ENCODE measurements at regions of chr2 and their contacts with region 1.

Region 1: GRCh38 chr2:37389989-37390765 is 45.7 kb downstream of the QPCT start:
- DNase-seq: peak; percentile 76
- ATAC-seq: peak; percentile 97
- H3K4me3 Mint-ChIP-seq: no peak overlapping the region
- H3K27ac Mint-ChIP-seq: peak overlapping the region; percentile 33
- H3K4me1 Mint-ChIP-seq: peaks cover 3% of the 10 kb centered on the region
- H3K27me3 Mint-ChIP-seq: peaks cover 3% of the 10 kb centered on the region

Region 2: GRCh38 chr2:37196320-37197195 is 193.6 kb before region 1 on chr2 and contains the start of gene CEBPZOS:
- CTCF ChIA-PET with region 1: no interaction called
- DNase-seq: peak; percentile 92
- ATAC-seq: peak; percentile 92
- H3K4me3 Mint-ChIP-seq: peak within 1 kb of the TSS; percentile 97
- H3K27ac Mint-ChIP-seq: peak within 1 kb of the TSS; percentile 99
- H3K4me1 Mint-ChIP-seq: peaks cover 33% of the 10 kb centered on the region
- H3K27me3 Mint-ChIP-seq: no peaks in the 10 kb centered on the region
- total RNA-seq, gene CEBPZOS: 35.6 to 37.9 TPM

Region 3: DNA sequence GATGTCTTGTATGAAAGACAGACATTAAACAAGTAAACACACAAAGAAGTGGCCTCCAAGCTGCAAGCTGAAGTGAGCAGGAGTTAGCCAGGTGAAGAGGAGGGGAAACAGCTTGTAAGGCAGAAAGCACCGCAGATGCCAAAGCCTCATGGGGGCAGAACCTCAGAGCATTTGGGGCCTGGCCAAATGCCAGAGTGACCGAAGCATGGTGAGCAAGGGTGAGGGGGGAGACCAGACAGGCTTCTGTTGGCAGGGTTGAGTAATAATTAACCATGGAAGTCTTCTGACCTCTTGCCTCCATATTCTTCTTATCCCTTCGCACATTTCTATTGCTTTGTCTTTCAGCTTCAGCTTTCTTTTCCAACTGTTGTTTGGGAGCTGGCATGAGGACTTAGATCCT is 40.1 kb before region 1 on chr2:
- CTCF ChIA-PET with region 1: no interaction called
- DNase-seq: no peak
- ATAC-seq: no peak
- H3K4me3 Mint-ChIP-seq: no peak overlapping the region
- H3K27ac Mint-ChIP-seq: no peak overlapping the region
- H3K4me1 Mint-ChIP-seq: no peaks in the 10 kb centered on the region
- H3K27me3 Mint-ChIP-seq: peaks cover 66% of the 10 kb centered on the region

Region 4: GRCh38 chr2:37414470-37414949 is 24.3 kb after region 1 on chr2:
- CTCF ChIA-PET with region 1: interaction called, 10 read pairs
- DNase-seq: no peak
- ATAC-seq: peak; percentile 64
- H3K4me3 Mint-ChIP-seq: no peak overlapping the region
- H3K27ac Mint-ChIP-seq: no peak overlapping the region
- H3K4me1 Mint-ChIP-seq: peaks cover 5% of the 10 kb centered on the region
- H3K27me3 Mint-ChIP-seq: peaks cover 7% of the 10 kb centered on the region

Region 5: GRCh38 chr2:37468170-37468569 is 78.0 kb after region 1 on chr2:
- CTCF ChIA-PET with region 1: no interaction called
- DNase-seq: no peak
- ATAC-seq: no peak
- H3K4me3 Mint-ChIP-seq: no peak overlapping the region
- H3K27ac Mint-ChIP-seq: no peak overlapping the region
- H3K4me1 Mint-ChIP-seq: no peaks in the 10 kb centered on the region
- H3K27me3 Mint-ChIP-seq: peaks cover 5% of the 10 kb centered on the region

Region 6: DNA sequence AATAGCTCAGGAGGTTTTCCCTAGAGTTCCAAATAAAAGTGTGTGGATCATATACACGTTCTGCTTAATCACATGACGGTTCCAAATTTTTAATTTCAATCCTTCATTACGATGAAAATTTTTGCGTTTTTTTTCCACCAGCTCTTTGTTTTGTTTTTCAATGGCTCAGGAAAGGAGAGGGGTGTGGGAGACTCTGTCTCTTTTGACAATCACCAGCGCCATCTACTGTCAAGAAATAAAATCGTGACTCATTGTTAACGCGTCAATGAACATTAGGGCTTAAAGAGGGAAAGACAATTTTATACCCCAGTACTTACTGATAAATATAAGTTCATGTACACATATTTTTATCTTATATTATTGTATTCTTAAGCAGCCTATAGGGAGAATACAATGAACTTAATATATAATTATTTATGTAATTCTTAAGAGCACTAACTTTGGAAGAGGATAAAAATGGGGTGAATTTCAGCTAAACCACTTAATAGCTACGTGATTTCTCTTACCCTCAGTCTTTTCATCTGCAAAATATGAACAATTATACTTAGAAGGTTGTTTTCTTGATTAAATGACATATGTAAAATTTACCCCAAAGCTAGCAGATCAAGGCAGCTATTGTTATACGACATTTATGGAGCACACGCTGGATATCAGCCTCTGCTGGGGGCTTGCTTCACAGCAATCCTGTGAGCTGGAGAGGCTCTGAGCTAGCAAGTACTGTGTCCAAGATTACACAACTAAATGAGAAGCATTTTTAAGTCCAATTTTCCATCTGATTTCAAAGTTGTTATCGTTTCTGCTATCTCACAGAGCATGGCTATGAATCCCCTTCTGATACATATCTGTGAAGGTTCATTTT is 487.5 kb after region 1 on chr2:
- CTCF ChIA-PET with region 1: interaction called, 126 read pairs
- DNase-seq: no peak
- ATAC-seq: peak; percentile 72
- H3K4me3 Mint-ChIP-seq: no peak overlapping the region
- H3K27ac Mint-ChIP-seq: no peak overlapping the region
- H3K4me1 Mint-ChIP-seq: peaks cover 12% of the 10 kb centered on the region
- H3K27me3 Mint-ChIP-seq: peaks cover 14% of the 10 kb centered on the region

Region 7: GRCh38 chr2:37890893-37891495 is 500.8 kb after region 1 on chr2:
- CTCF ChIA-PET with region 1: interaction called, 17 read pairs
- DNase-seq: peak; percentile 75
- ATAC-seq: peak; percentile 80
- H3K4me3 Mint-ChIP-seq: no peak overlapping the region
- H3K27ac Mint-ChIP-seq: no peak overlapping the region
- H3K4me1 Mint-ChIP-seq: peaks cover 18% of the 10 kb centered on the region
- H3K27me3 Mint-ChIP-seq: peaks cover 17% of the 10 kb centered on the region

Region 8: DNA sequence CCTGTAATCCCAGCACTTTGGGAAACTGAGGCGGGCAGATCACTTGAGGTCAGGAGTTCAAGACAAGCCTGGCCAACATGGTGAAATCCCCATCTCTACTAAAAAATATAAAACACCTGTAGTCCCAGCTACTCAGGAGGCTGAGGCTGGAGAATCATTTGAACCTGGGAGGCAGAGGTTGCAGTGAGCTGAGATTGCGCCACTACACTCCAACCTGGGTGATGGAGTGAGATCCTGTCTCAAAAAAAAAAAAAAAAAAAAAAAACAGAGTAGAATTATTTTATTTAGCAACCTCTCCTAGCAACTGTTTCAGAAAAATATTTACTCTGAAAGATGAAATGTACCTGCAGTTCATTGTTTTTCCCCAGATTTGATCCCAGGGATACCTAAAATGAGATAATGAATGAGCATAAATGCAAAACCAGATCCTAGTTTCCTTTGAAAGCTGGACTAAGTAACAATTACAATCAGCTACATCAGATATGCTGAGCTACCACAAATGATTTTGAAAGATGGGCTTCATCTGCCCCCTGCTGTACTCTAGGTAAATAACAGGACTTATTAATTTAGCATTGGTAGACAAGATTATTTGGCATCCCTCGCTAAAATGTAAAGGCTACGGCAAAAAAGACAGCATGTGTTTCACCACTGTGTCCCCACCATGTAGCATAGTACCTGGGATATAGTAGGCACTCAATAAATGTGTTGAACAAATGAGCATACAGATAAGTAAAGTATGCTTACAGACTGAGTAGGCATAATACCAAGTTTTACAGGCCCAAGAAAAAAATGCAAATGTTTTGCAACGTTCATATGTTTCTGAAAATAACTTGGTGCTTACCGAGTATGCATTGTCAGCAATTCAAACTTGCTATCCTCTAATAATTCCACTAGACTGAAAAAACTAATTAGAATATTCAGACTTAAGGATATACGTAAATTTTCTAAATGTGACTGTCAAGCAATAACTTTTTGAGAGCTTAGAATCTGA is 884.4 kb after region 1 on chr2:
- CTCF ChIA-PET with region 1: interaction called, 10 read pairs
- DNase-seq: no peak
- ATAC-seq: no peak
- H3K4me3 Mint-ChIP-seq: no peak overlapping the region
- H3K27ac Mint-ChIP-seq: no peak overlapping the region
- H3K4me1 Mint-ChIP-seq: peaks cover 5% of the 10 kb centered on the region
- H3K27me3 Mint-ChIP-seq: peaks cover 2% of the 10 kb centered on the region